AG04449 (cell line): ENCODE measurements at regions of chr9 and their contacts with region 1.

Region 1: DNA sequence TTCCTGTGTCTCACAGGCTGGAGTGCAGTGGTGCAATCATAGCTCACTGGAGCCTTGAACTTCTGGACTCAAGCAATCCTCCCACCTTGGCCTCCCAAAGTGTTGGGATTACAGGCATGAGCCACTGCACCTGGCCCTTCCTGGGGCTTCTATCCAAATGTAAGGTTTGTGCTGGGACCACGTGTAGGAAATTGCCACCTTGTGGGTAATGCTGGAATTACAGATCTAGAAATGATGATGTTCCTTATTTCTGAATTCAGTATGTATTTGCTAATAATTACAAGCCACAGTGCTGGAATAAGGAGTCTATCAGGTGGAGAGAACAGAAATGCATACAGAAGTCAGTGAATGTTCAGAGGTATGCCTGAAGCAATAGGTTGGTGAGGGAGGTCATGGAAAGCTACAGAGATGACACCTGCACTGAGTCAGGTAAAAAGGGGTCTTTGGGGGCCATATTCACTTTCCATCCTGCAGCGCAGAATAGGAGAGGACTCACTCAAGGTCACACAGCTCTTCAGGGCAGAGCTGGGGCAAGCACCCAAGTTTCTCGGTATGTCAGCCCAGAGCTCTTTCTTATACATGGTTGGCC is 8.8 kb upstream of the IGFBPL1 start:
- DNase-seq: no peak
- H3K4me3 ChIP-seq: no peak overlapping the region
- CTCF ChIP-seq: peak; percentile 43

Region 2: DNA sequence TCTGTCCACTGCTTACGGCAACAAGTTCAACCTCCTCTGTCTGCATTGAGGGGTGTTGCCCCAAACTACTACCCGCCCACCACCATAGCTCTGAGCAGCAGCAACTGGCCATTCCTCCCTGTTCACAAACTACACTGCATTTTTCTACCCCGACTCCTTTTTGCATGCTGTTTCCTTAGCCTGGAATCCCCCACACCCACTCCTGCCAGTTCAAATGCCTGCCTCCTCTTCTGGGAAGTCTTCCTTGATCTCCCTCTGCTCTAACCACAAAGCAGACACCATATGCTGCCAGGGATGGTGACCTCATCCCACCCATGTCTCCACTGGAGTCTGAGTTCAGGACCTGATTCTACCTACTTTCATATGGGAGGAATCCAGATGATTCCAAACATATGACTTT is 27.2 kb before region 1 on chr9:
- CTCF ChIA-PET with region 1: interaction called, 14 read pairs
- POLR2A ChIA-PET with region 1: no interaction called
- DNase-seq: no peak
- H3K4me3 ChIP-seq: no peak overlapping the region
- CTCF ChIP-seq: no peak

Region 3: DNA sequence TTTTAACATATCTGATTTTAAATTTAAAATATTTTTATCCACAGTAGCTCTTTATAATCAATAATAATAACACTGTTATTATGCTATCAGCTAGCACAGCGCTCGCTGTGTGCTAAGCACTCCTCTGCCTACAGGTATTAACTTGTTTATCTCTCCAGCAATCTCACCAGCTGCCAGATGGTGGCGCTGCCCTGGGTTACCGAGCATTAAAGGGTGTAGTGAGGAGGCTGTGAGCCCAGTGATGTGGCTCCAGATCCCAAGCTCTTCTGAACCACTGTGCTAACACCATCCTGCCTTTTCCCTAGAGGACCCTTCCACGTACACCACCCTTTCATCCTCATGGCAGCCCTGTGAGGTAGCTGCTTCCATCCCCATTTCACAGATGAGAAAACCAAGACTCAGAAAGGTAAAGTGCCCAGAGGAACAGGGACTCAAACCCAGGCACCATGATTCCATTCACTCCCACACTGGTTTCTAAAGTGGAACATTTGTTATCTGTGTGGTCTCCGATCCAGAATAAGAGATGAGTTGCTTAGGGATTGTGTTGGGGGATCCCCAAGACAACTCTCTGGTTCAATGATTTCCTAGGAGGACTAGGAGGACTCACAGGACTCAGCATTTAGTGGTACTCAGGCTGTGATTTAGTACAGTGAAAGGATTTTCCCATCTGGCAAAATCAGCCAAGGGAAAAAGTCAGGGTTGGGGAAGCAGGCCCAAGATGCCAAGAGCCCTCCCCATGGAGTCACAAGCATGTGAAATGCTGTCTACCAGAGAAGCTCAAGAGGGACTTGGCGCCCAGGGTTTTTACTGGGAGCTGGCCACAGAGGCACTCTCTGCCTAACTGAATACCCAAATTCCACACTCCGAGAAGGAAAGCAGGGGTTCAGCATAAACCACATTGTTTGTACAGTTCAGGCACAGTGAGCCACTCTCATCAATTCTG is 15.7 kb before region 1 on chr9:
- CTCF ChIA-PET with region 1: interaction called, 27 read pairs
- POLR2A ChIA-PET with region 1: no interaction called
- DNase-seq: no peak
- H3K4me3 ChIP-seq: no peak overlapping the region
- CTCF ChIP-seq: peak; percentile 39

Region 4: GRCh38 chr9:38443181-38443580 is 10.2 kb after region 1 on chr9:
- CTCF ChIA-PET with region 1: interaction called, 16 read pairs
- POLR2A ChIA-PET with region 1: no interaction called
- DNase-seq: no peak
- H3K4me3 ChIP-seq: no peak overlapping the region
- CTCF ChIP-seq: no peak

Region 5: GRCh38 chr9:38482918-38483592 is 50.0 kb after region 1 on chr9:
- CTCF ChIA-PET with region 1: no interaction called
- POLR2A ChIA-PET with region 1: no interaction called
- DNase-seq: no peak
- H3K4me3 ChIP-seq: no peak overlapping the region
- CTCF ChIP-seq: no peak